Adrenal gland (tissue), 19 donors: ENCODE measurements at regions of chr22 and their contacts with region 1.

Region 1: DNA sequence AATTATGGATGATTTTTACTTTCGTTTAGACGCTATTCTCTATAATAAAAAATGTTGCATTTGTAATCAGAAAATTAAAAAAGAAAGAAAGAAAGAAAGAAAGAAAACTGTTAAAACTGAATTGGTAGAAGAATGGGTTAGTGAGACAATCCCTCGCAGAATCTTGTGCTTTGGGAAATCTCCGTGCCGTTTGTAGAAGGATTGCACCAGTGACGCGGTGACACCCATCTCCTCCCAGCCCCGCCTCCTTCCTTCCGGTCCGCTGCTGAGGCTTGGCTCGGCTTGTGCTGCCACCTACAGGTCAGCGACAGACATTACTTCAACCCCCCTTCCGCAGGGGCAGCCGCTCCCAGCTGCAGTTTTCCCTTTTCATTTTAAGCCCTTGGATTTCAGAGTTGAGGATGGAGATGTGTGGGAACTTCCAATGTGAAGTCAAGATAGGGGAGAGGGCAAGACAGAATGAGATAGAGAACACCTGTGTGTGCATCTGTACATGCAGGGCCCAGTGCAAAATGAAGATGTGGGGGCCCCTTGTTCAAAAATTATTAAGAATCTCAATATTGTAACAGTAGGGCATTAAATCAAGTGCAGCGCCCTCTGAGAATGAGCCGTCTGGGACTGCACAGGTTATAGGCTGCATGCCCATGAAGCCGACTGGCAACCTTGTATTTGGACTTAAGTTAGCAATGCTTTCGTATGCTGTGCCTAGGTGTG is 41.1 kb downstream of the TST start:
- DNase-seq: peak; percentile 89 to 96 (median 94)
- H3K4me3 ChIP-seq: peak overlapping the region in 2 of 4 donors; percentile 26 to 48
- H3K27ac ChIP-seq: peak overlapping the region in 2 of 5 donors; percentile 34 to 40
- H3K4me1 ChIP-seq: peaks cover 0 to 9% of the 10 kb centered on the region in 2 donors
- H3K27me3 ChIP-seq: no peaks in the 10 kb centered on the region
- CTCF ChIP-seq: peak; percentile 91 to 98 (median 97)
- POLR2A ChIP-seq: peak in 1 of 2 donors; percentile 58

Region 2: GRCh38 chr22:36546092-36546804 is 431.9 kb before region 1 on chr22:
- intact Hi-C with region 1: loop called in 1 of 2 experiments (anchors 5 kb)
- DNase-seq: peak; percentile 31 to 67 (median 48)
- H3K4me3 ChIP-seq: no peak overlapping the region
- H3K27ac ChIP-seq: no peak overlapping the region
- H3K4me1 ChIP-seq: no peaks in the 10 kb centered on the region
- H3K27me3 ChIP-seq: peaks cover 2% of the 10 kb centered on the region
- CTCF ChIP-seq: peak; percentile 12 to 57 (median 42)
- POLR2A ChIP-seq: no peak

Region 3: DNA sequence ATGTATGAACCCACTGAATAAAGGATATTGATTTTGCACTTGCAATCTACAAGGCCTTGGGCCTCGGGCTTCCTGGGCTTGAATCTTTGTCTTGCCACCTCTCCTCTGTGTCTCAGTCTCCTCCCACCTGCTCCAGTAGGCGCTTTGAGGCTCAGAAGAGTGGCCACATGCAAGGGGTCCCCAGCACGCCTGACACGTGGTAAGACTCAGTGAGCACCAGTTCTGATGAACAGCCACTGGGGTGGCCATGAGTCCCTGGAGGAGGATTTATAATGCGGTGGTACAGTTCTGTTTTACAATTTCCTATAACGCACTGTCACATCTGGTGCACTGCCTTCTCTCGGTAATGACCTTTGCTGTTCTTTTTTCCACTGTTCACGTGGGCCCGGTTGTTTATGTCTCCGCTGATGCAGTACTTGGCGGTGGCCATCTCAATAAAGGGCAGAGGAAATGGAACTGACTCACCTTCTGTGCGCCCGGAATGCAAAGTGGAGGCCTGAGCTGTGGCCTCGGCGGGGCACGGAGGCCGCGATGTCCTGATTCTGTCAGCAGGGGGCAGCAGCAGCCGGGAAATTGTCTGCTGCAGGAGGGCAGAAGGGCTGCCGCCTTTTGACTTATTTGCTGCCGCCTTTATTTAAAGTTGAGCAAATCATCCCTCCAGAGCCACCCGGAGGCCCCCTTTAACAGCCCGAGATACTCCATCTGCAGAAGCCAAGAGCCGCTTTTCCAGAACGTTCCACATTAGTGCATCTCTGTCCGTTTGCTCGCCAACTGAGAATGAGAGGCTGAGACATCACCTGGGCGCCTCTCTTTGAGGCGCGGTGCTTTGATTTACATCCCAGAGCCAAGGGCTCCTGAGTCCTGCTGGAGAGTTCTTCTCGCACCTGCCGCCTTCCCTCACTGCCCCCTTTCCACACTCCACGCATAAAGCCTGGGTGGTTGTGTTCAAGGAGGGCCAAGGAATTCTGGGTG is 196.2 kb before region 1 on chr22:
- intact Hi-C with region 1: loop called (anchors 2 to 5 kb)
- DNase-seq: peak; percentile 86 to 92 (median 89)
- H3K4me3 ChIP-seq: no peak overlapping the region
- H3K27ac ChIP-seq: peak overlapping the region in 2 of 5 donors; percentile 58 to 80
- H3K4me1 ChIP-seq: peaks cover 0 to 6% of the 10 kb centered on the region in 2 donors
- H3K27me3 ChIP-seq: peaks cover 8% of the 10 kb centered on the region
- CTCF ChIP-seq: peak; percentile 88 to 94 (median 92)
- POLR2A ChIP-seq: no peak

Region 4: DNA sequence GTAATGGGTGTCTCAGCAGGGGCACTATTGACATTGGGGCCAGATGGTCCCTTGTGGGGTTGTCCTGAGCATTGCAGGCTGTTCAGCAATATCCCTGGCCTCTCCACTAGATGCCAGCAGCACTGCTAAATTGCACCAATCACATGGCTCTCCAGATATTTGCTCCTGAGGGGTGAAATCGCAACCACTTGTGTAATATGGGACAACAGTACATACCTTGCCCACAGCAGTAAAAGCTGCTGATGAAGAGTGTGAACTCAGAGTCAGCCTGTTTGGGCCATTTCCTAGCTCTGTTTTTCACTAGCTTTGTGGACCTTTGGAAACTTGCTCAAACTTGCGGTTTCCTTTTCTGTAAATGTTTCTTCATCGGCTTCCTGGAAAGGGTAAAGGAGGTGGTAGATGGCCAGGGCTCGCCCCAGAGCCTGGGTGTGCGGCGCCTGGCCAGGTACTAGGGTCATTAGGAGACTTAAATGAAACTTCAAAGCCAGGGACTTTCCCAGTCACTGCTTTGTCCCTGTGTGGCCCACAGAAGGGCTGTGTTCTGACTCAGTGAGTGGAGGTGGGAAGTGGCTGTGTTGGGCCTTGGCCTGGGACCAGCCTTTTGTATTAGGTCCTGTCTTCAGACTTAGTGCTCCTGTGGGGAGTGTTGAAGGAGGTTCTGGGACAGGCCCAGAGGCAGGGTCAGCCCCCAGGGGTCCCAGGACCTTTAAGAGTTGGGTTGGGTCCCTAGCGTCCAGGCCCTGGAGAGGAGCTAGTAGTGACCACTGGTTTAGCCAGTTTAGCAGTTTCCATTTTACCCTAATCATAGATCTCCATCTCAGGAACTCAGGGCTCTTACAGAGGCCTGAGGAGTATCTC is 104.2 kb before region 1 on chr22:
- intact Hi-C with region 1: loop called (anchors 5 kb)
- DNase-seq: peak in 6 of 7 donors; percentile 41 to 78 (median 54)
- H3K4me3 ChIP-seq: no peak overlapping the region
- H3K27ac ChIP-seq: peak overlapping the region in 1 of 5 donors; percentile 72
- H3K4me1 ChIP-seq: no peaks in the 10 kb centered on the region
- H3K27me3 ChIP-seq: no peaks in the 10 kb centered on the region
- CTCF ChIP-seq: peak; percentile 23 to 74 (median 58)
- POLR2A ChIP-seq: no peak

Region 5: DNA sequence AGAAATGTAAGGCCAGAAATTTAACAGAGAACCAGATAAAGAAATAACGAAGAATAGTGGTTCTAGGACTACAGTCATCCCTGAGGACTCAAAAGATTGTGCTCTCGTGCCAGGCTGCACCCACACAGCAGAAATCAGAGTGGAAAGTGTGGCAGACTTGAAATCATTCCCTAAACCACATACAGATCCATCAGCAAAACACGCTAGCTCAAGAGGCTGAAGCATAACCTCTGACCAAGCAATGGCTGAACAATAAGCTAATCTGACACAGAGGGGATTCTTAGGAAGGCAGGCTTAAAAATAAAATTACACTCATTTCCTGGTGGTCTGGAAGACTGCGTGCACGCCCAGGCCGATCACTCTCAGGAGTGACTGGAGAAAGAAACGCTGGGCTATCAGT is 98.3 kb before region 1 on chr22:
- intact Hi-C with region 1: loop called (anchors 5 kb)
- DNase-seq: peak in 1 of 7 donors; percentile 21
- H3K4me3 ChIP-seq: no peak overlapping the region
- H3K27ac ChIP-seq: no peak overlapping the region
- H3K4me1 ChIP-seq: no peaks in the 10 kb centered on the region
- H3K27me3 ChIP-seq: no peaks in the 10 kb centered on the region
- CTCF ChIP-seq: no peak
- POLR2A ChIP-seq: no peak

Region 6: DNA sequence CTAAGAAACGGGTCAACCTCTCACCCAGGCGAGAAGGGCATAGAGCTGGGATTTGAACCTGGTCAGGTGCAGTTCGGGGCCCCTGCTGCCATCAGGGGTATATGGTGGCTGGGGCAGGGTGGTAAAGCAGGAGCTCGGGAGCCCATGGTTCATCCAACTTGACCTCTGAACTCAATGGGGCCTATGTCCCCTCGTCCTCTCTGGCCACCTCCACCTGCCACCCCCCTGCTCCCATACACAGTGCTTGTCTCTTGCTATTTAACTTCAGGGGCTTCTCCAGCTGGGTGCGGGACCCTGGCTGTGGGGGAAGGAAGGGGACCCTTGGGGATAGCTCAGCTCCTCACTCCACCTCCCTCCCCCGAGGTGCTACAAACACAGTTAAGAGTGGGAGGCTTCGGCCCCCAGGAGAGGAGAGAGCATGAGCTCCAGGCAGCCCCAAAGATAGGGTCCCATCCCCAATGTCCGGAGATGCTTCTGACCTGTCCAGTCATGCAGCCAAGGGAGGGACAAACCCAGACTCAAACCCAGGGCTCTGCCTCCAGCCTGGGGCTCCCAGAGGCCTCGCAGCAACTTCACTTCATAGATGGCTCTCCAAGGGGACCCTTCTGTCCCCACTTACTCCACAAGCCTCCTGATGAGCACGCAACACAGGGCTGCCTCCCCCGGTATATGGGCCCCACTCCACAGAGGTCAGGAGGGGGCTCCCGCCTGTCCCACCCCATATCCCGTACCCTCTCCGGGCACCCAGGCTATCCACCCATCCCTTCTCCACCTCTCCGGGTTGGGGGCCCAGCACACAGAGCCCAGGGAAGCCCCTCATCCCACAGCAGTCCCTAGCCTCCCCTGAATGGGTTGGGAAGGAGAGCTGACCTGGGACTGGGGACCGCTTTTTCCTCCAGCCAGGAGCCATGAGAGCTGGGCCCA is 170.9 kb after region 1 on chr22:
- intact Hi-C with region 1: no loop called
- DNase-seq: no peak
- H3K4me3 ChIP-seq: no peak overlapping the region
- H3K27ac ChIP-seq: no peak overlapping the region
- H3K4me1 ChIP-seq: no peaks in the 10 kb centered on the region
- H3K27me3 ChIP-seq: no peaks in the 10 kb centered on the region
- CTCF ChIP-seq: no peak
- POLR2A ChIP-seq: no peak